AG04449 (cell line): ENCODE measurements at regions of chr17 and their contacts with region 1.

Region 1: GRCh38 chr17:3845621-3846441 is at the start of gene NCBP3:
- DNase-seq: peak; percentile 44
- H3K4me3 ChIP-seq: peak within 1 kb of the TSS; percentile 93
- CTCF ChIP-seq: peak; percentile 99

Region 2: DNA sequence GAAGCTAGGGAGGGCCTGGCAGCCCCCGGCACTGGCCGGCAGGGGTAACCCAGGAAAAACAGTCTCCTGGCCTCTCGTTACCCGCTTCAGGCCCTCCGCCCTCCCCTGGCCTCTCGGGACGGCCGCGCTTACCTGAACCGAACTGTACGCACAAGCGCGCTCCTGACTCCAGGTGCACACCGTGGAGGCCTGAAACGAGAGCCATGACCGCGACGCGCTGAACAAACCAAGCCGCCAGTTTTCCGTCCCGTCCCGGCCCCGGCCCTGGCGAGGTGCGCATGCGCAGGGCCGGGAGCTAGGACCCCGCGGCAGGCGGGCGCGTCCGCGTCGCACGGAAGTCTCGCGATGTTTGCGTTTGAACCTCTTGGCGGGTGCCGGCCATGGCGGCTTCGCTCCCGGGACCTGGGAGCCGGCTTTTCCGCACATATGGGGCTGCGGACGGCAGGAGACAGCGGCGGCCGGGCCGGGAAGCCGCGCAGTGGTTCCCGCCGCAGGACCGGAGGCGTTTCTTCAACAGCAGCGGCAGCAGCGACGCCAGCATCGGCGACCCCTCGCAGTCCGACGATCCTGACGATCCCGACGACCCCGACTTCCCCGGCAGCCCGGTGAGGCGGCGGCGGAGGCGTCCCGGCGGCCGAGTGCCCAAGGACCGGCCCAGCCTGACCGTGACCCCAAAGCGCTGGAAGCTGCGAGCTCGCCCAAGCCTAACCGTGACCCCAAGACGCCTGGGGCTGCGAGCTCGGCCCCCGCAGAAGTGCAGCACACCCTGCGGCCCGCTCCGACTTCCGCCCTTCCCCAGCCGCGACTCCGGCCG is 122.1 kb before region 1 on chr17 and contains the start of gene HASPIN:
- CTCF ChIA-PET with region 1: interaction called, 12 read pairs
- POLR2A ChIA-PET with region 1: no interaction called
- DNase-seq: no peak
- H3K4me3 ChIP-seq: peak within 1 kb of the TSS; percentile 87
- CTCF ChIP-seq: peak; percentile 42

Region 3: DNA sequence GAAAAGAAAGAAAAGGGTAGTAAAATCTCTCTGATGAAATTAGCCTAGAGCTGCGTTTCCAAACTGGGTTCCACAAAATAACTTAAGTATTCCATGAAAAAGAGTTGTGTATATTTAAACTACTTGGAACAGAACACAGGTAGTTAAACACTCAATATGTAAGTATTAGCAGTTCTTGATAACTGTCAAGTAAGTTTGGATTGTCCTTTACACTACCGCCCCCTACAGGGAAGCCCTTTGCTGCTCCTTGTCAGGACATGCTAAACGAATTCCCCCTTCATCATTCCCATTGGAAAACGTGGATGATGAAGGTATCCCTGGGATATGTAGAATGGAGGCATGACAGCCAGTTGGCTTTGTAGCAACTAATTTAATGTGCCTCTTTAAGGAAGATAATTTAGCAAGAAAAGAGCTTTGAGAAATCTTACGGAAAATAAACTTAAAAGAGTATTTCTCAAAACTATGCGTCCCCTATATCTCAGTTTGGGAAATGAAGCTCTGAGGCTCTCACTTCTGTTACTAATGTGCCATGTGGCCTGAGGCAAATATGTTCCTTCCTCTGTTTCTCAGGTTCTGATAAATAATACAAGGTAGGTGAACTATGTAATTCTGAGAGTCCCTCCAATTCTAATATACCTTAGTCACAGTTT is 18.6 kb before region 1 on chr17:
- CTCF ChIA-PET with region 1: interaction called, 128 read pairs
- POLR2A ChIA-PET with region 1: no interaction called
- DNase-seq: no peak
- H3K4me3 ChIP-seq: no peak overlapping the region
- CTCF ChIP-seq: peak; percentile 66

Region 4: DNA sequence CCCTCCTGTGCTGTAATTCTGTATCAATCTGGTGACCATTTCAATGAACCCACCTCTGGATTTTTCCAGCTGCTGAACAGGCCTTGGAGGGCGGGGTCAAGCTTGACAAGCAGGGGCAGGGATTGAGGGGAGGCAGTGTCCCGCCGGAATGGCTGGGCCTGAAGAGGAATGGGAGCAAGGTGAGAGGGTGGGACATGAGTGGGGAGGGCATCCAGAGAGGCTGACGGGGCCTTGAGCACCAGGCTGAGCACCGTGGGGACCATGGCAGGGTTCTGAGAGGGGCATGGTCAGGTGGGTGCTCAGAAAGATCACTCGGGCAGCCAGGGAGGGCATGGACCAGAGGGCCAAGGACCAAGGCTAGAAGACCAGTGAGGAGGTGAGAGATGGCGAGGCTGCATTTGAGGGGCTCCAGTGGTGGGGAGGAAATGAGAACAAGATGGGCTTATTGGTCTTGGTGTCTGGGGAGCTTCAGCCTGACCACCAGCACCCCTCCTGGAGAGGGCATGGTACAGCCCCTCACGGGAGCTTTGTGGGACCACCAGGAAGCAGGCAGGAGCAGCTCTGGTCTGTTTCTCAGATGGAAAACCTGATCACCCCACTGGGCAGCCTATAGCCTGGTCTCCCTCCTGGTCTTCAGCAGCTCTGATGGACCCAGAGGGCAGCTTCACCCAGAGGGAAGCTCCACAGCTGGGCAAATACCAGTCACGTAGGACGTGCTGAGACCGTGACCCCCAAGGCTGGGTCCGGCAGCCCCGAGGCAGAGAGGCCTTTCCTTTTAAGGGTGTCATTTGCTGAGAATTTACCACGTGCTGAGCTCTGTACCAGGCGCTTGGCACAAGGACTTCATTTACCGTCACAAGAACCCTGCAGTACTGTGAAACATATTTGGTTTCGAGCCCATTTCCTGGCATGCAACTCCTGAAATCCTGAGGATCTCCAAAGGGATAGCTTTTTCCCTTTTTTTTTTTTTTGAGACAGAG is 11.6 kb after region 1 on chr17:
- CTCF ChIA-PET with region 1: interaction called, 172 read pairs
- POLR2A ChIA-PET with region 1: interaction called, 3 read pairs
- DNase-seq: no peak
- H3K4me3 ChIP-seq: no peak overlapping the region
- CTCF ChIP-seq: no peak

Region 5: DNA sequence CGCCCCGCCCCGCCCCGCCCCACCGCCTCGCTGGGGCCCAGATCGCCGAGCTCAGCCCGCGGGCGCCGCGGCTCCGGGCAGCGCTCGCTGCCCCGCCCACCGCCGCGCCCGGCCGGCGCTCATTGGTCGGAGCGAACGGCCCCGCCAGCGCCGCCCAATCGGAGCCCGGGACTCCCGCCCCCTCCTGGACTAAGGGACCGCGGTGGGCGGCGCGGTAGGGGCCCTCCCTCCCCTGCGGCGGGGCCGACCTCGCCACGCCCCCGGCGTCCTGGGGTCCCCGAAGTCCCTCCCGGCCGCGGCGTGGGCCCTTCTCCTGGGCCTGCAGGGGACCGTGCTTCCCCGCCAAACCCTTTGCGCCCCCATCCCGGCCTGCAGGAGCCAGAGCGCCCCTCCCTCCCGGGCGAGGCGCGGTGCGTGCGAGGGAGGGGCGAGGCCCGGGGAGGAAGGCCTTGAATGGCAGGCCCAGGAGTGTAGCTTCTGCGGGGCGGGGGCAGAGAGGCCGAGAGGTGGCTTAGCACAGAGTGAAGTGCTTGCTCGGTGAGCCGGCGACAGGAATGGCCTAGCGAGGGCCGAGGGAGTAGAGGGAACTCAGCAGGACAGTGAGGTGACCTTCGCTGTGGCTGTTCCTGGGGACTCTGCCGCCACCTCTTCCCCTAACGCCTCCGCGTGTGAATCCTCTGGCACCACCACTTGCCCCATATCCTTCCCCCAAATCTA is 47.3 kb after region 1 on chr17 and contains the start of gene CAMKK1:
- CTCF ChIA-PET with region 1: interaction called, 18 read pairs
- POLR2A ChIA-PET with region 1: interaction called, 5 read pairs
- DNase-seq: no peak
- H3K4me3 ChIP-seq: peak within 1 kb of the TSS; percentile 70
- CTCF ChIP-seq: no peak

Region 6: DNA sequence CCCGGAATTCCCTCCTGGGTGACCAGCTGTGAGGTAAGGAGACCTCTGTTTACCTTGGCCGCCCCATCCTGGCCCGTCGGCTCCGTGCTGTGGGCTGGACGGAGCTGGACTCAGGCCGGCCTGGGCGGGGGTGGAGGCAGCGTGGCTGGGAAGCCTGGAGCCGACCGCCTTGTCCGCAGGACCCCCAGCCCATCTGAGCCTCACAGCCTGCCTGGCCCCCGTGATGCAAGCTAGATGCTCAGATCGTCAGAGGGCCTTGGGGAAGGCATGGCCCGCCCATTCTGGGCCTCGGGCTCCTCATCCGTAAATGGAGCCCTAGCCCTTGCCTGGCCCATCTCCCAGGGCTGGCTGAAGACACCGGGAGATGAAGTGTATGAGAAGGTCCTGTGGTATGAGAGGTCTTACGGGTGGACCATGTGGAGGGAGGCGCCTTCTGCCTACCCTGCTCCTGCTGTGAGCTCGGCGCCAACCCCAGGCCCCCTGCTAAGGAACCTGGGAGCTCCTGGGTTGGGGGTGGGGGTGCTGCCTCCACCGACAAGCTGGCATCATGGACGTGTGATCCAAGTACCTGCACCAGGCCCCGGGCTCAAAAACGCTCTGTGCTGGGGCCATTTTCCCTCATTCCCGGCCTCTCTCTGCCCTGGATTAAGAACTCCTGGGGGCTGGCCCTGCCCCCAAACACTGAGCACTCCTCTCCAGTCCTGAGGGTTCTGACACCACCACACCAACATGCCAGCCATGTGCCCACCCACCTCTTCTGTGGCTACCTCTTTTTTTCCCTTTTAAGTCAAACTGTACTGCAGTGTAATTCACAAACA is 75.9 kb after region 1 on chr17:
- CTCF ChIA-PET with region 1: no interaction called
- POLR2A ChIA-PET with region 1: no interaction called
- DNase-seq: no peak
- H3K4me3 ChIP-seq: no peak overlapping the region
- CTCF ChIP-seq: no peak

Region 7: GRCh38 chr17:4276511-4276910 is 430.7 kb after region 1 on chr17:
- CTCF ChIA-PET with region 1: no interaction called
- POLR2A ChIA-PET with region 1: no interaction called
- DNase-seq: no peak
- H3K4me3 ChIP-seq: no peak overlapping the region
- CTCF ChIP-seq: no peak